ENCODE measurements at regions of chr10 and their contacts with region 1.

Region 1: GRCh38 chr10:27661514-27662286 is 83.9 kb downstream of the MKX start:
- DNase-seq: no peak
- H3K4me3 ChIP-seq: no peak overlapping the region
- H3K27ac ChIP-seq: no peak overlapping the region
- H3K4me1 ChIP-seq: no peaks in the 10 kb centered on the region
- CTCF ChIP-seq: no peak

Region 2: DNA sequence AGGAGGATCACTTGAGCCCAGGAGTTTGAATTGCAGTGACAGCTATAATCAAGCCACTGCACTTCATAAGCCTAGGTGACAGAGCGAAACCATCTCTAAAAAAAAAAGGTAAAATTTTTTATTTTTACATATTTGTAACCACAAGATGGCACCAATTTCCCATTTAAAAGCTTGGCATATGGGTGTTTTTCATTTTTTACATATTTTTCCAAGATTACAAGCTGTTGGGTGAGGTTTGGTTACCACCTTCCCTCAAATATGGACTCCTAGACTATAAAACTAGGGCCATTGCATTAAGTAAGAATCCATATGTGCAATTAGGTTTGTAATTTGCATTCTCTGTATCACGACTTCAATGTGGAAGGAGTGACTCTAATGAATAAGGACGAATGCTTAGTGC is 291.8 kb before region 1 on chr10:
- CTCF ChIA-PET with region 1: no interaction called
- POLR2A ChIA-PET with region 1: no interaction called
- intact Hi-C with region 1: loop called (anchors 2 kb)
- DNase-seq: peak; percentile 27
- H3K4me3 ChIP-seq: no peak overlapping the region
- H3K27ac ChIP-seq: no peak overlapping the region
- H3K4me1 ChIP-seq: peaks cover 3% of the 10 kb centered on the region
- CTCF ChIP-seq: peak; percentile 71

Region 3: GRCh38 chr10:27446091-27446918 is 215.4 kb before region 1 on chr10:
- CTCF ChIA-PET with region 1: no interaction called
- POLR2A ChIA-PET with region 1: no interaction called
- intact Hi-C with region 1: loop called (anchors 5 kb)
- DNase-seq: peak; percentile 40
- H3K4me3 ChIP-seq: no peak overlapping the region
- H3K27ac ChIP-seq: no peak overlapping the region
- H3K4me1 ChIP-seq: no peaks in the 10 kb centered on the region
- CTCF ChIP-seq: peak; percentile 76

Region 4: DNA sequence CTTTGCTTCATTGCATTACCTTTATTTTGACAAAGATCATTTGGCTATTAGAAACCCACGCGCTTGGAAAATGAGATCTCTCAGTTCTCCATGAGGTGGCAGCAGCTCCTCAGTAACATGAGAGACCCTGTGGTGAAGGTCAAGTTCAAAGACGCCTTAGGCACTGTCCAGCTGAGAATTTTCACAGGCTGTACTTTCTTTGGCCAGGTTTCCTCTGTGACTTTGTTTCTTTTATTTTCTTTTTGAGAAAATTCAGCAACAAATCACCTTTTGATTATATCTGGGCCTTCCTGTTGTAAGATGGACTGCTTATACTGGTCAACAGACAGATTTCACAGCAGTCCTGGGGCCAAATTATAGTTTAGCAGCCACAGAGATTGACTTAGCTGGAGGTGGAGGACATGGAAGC is 103.1 kb before region 1 on chr10:
- CTCF ChIA-PET with region 1: no interaction called
- POLR2A ChIA-PET with region 1: no interaction called
- intact Hi-C with region 1: loop called (anchors 2 kb)
- DNase-seq: peak; percentile 68
- H3K4me3 ChIP-seq: no peak overlapping the region
- H3K27ac ChIP-seq: no peak overlapping the region
- H3K4me1 ChIP-seq: no peaks in the 10 kb centered on the region
- CTCF ChIP-seq: peak; percentile 86

Measured in OCI-LY7 (cell line).